ENCODE measurements at regions of chr1 and their contacts with region 1.

Region 1: GRCh38 chr1:66331657-66332547 is 202.1 kb upstream of the SGIP1 start:
- DNase-seq: peak; percentile 63
- H3K4me3 Mint-ChIP-seq: peak overlapping the region; percentile 98
- H3K27ac Mint-ChIP-seq: peak overlapping the region; percentile 93
- H3K4me1 Mint-ChIP-seq: peaks cover 49% of the 10 kb centered on the region
- H3K27me3 Mint-ChIP-seq: no peaks in the 10 kb centered on the region

Region 2: GRCh38 chr1:65971547-65971946 is 360.4 kb before region 1 on chr1:
- CTCF ChIA-PET with region 1: no interaction called
- POLR2A ChIA-PET with region 1: no interaction called
- DNase-seq: no peak
- H3K4me3 Mint-ChIP-seq: no peak overlapping the region
- H3K27ac Mint-ChIP-seq: no peak overlapping the region
- H3K4me1 Mint-ChIP-seq: no peaks in the 10 kb centered on the region
- H3K27me3 Mint-ChIP-seq: peaks cover 9% of the 10 kb centered on the region

Region 3: DNA sequence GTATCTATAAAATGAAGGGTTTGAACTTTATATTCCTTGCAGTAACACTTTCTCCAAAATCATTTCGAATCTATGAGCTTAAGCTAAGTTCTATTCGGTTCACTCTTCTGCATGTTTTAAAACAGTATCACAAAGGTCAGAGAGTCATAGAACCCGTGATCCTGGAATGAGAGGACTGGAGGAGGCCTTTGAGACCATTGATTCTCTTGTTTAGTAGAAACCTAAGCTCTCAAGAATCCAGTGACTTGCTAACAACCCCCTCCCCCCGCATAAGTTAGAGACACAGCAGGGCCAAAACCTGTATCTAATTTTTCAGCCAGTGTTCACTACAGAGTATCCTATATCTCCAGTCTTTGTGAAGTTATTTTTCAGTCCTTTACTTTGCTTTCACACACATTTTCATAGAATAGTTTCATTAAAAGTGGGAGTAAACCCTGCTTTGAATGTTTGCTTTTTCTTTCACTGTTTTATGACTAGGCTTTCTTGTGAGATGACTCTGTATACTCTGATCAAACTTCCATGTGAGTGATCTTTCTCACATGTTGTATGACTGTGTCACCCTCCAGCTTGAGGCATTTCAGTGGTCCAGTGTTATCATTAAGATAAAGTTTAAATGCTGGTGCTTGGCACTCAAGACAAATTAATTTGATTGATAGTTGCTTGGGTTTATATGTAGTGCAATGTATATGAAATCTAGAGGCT is 73.3 kb before region 1 on chr1:
- CTCF ChIA-PET with region 1: interaction called, 7 read pairs
- POLR2A ChIA-PET with region 1: interaction called, 11 read pairs
- DNase-seq: no peak
- H3K4me3 Mint-ChIP-seq: no peak overlapping the region
- H3K27ac Mint-ChIP-seq: peak overlapping the region; percentile 21
- H3K4me1 Mint-ChIP-seq: peaks cover 74% of the 10 kb centered on the region
- H3K27me3 Mint-ChIP-seq: no peaks in the 10 kb centered on the region

Region 4: DNA sequence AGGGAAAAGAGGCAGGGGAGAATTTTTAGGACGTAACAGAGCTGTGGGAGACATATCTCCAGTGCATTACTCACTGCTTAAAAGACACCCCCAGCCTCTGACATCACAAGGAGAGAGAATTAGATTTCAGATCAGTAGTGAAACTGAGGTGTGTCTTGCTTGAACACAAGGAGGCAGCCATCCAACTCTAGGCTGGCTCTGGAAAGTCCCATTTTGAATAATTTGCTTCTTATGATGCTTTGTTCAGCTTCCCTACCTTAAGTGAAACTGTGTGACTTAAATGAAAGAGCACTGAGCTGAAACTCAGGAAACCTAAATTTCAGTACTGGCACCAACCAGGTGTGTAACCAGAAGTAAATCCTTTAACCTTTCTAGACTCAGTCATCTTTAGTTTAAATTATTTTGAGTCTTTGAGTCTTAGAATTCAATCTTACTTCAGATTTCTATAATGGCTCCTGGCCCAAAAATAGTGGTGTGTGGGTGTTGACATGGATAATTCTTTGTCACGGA is 49.5 kb before region 1 on chr1:
- CTCF ChIA-PET with region 1: interaction called, 19 read pairs
- POLR2A ChIA-PET with region 1: interaction called, 58 read pairs
- DNase-seq: peak; percentile 66
- H3K4me3 Mint-ChIP-seq: no peak overlapping the region
- H3K27ac Mint-ChIP-seq: peak overlapping the region; percentile 19
- H3K4me1 Mint-ChIP-seq: peaks cover 83% of the 10 kb centered on the region
- H3K27me3 Mint-ChIP-seq: no peaks in the 10 kb centered on the region

Region 5: GRCh38 chr1:66300972-66301451 is 30.9 kb before region 1 on chr1:
- CTCF ChIA-PET with region 1: interaction called, 3 read pairs
- POLR2A ChIA-PET with region 1: interaction called, 67 read pairs
- DNase-seq: peak; percentile 53
- H3K4me3 Mint-ChIP-seq: peak overlapping the region; percentile 76
- H3K27ac Mint-ChIP-seq: peak overlapping the region; percentile 85
- H3K4me1 Mint-ChIP-seq: peaks cover 49% of the 10 kb centered on the region
- H3K27me3 Mint-ChIP-seq: no peaks in the 10 kb centered on the region

Region 6: DNA sequence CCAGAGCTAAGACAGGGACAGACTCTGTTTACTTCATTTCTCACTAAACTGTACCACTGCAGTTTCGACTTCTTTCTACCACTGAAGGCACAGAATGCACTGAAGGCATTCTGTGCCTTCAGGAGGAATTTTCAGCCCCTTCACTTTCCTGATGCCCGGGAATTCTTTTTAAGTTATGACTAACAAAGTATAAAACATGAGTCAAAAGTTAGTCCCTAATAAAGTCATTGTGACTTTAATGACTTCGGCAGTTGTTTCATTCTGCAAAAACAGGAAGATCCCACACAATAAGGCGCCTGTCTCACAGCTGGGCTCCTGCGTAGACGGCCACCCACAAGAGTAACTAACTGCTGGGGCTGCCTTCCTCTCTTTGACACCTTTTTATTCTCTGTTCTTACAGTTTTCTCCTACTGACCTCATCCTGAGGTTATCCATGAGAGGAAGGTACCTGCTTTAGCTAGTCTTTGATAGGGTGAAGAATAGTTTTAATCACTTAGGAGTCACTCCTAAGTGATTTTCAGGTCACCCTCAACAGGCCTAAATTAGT is 18.2 kb after region 1 on chr1:
- CTCF ChIA-PET with region 1: interaction called, 19 read pairs
- POLR2A ChIA-PET with region 1: interaction called, 255 read pairs
- DNase-seq: peak; percentile 55
- H3K4me3 Mint-ChIP-seq: peak overlapping the region; percentile 66
- H3K27ac Mint-ChIP-seq: peak overlapping the region; percentile 80
- H3K4me1 Mint-ChIP-seq: peaks cover 94% of the 10 kb centered on the region
- H3K27me3 Mint-ChIP-seq: no peaks in the 10 kb centered on the region

Region 7: GRCh38 chr1:66413136-66413837 is 81.4 kb after region 1 on chr1:
- CTCF ChIA-PET with region 1: no interaction called
- POLR2A ChIA-PET with region 1: no interaction called
- DNase-seq: no peak
- H3K4me3 Mint-ChIP-seq: no peak overlapping the region
- H3K27ac Mint-ChIP-seq: no peak overlapping the region
- H3K4me1 Mint-ChIP-seq: peaks cover 27% of the 10 kb centered on the region
- H3K27me3 Mint-ChIP-seq: no peaks in the 10 kb centered on the region

Region 8: DNA sequence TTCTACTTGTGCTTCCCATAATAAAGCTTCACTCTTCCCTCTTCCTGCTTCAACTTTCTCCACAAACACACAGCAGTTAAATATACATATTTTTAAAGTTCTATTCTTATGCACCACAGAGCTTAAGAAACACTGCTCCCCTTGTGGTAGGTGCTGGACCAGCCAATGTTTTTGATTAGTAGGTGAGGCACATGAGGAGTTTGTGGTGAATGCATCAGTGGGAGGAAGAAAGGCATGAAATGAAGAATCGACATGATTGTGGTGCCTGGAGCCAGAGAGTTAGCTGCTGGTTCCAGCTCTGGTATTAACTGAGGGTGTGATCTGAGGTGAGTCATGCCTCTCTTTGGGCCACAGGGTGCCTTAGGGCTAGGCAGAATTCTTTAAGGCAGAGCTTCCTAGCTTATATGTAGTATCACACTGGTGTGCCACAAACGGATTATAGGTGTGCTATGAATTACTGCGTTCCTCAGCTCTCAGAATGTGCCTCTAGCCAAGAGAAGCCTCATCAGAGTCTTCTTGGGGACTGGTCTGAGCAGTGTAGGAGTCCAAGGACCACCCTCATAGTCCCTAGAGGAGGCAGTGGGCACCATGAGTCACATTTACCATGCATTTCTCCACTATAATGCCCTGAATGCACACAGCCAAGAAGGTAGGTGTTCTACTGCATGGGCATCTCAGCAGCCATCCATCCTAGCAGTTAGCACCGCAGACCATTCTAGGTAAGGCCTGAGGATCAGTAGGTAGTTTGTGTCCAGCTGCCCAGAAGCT is 104.7 kb after region 1 on chr1:
- CTCF ChIA-PET with region 1: interaction called, 15 read pairs
- POLR2A ChIA-PET with region 1: interaction called, 15 read pairs
- DNase-seq: peak; percentile 62
- H3K4me3 Mint-ChIP-seq: no peak overlapping the region
- H3K27ac Mint-ChIP-seq: peak overlapping the region; percentile 57
- H3K4me1 Mint-ChIP-seq: peaks cover 44% of the 10 kb centered on the region
- H3K27me3 Mint-ChIP-seq: no peaks in the 10 kb centered on the region

Region 9: DNA sequence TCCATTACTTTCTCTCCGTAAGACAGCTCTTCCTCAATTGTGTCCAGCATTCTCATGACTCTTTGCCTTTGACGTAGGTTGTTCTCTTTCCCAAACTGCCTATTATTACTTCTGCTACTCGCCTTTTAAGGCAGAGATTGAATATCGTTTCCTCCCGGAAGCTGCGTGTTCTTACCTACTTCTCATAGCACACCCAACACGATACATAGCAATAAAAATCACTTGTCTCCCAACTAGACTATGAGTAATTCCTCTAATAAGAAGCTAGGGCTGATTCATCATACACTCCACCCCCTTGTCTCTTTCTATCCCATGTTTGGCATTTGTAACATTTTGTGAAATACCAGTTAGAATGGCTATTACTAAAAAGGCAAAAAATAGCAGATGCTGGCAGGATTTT is 146.2 kb after region 1 on chr1:
- CTCF ChIA-PET with region 1: no interaction called
- POLR2A ChIA-PET with region 1: no interaction called
- DNase-seq: no peak
- H3K4me3 Mint-ChIP-seq: no peak overlapping the region
- H3K27ac Mint-ChIP-seq: no peak overlapping the region
- H3K4me1 Mint-ChIP-seq: no peaks in the 10 kb centered on the region
- H3K27me3 Mint-ChIP-seq: peaks cover 23% of the 10 kb centered on the region